ENCODE measurements at regions of chr7 and their contacts with region 1.

Region 1: GRCh38 chr7:82481499-82482097 is 38.0 kb upstream of the CACNA2D1 start:
- DNase-seq: no peak
- H3K4me3 ChIP-seq: no peak overlapping the region
- H3K27ac ChIP-seq: no peak overlapping the region
- H3K4me1 ChIP-seq: no peaks in the 10 kb centered on the region
- H3K27me3 ChIP-seq: no peaks in the 10 kb centered on the region
- CTCF ChIP-seq: peak in 2 of 3 experiments; percentile 69 to 83

Region 2: DNA sequence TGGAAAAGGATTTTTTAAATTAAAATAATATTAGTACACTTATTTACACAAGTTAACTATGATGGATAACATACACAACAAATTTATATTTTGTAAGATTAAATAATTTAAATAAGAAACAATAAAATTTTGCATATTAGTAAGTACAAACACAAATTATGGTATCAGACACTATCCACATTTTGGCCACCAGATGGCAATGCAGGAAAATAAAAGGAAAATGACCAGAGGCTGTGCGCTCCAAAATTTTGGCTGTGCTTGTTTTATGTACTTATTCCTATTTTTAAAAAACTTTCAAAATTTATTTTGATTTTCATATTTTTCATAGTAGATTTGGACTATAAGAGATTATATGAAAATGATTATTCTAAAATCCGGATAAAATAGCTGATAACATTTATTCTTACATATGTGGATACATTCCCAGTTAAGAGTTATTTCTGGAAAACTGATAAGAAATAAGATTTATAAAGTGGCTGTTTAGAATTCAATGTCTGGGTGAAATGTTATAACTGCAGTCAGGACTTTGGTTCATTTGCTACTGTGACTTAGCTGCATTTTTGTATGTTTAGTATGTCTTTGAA is 437.0 kb before region 1 on chr7:
- intact Hi-C with region 1: loop called (anchors 2 kb)
- DNase-seq: no peak
- H3K4me3 ChIP-seq: no peak overlapping the region
- H3K27ac ChIP-seq: no peak overlapping the region
- H3K4me1 ChIP-seq: peaks cover 0 to 3% of the 10 kb centered on the region in 2 donors
- H3K27me3 ChIP-seq: no peaks in the 10 kb centered on the region
- CTCF ChIP-seq: peak; percentile 30 to 73 (median 61)

Region 3: DNA sequence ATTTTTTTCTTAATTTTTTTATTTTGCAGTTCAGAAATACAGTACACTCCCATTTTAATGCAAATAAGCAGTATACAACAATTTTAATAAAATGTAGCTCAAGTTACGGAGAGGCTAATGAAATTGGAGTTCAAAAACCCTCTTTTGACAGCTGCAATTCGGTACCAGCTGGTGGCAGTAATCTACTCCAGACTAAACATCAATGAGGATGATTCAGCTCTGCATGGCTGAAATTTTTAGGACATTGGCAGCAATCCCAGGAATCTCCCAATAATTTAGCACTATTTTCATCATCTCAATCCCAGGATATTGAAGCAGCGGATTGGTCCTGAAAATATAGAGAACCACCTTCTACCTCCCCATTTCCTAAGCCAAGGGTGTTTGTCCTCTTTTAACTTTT is 316.8 kb before region 1 on chr7:
- intact Hi-C with region 1: loop called (anchors 10 kb)
- DNase-seq: no peak
- H3K4me3 ChIP-seq: no peak overlapping the region
- H3K27ac ChIP-seq: no peak overlapping the region
- H3K4me1 ChIP-seq: peaks cover 0 to 4% of the 10 kb centered on the region in 2 donors
- H3K27me3 ChIP-seq: no peaks in the 10 kb centered on the region
- CTCF ChIP-seq: peak in 2 of 3 experiments; percentile 23 to 34

Region 4: DNA sequence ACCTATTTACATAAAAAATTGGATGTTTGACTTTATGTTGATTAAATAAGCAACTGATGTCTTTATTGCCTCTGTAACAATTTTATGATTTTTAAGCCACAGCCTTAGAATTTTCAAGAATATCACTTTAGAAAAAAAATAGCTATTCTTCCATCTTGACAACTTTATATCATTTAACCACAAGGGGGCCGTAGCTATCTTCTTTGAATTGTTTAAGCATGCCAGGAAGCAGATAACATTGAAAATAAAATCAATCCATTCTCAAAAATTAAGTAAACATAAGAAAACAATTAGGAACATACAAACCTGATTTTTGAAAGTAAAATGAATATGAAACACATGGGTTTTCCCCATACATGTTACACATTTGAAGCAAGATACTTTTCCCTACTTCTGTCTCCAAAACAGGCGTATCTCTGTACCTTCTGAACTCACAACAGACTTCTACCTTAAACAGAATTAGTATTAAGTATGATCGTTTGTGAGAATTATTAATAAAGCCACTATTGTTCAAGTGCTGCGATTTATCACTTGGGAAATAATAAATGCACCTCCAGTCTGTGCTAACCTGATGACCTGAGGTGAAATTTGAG is 247.0 kb before region 1 on chr7:
- intact Hi-C with region 1: loop called (anchors 10 kb)
- DNase-seq: no peak
- H3K4me3 ChIP-seq: no peak overlapping the region
- H3K27ac ChIP-seq: no peak overlapping the region
- H3K4me1 ChIP-seq: no peaks in the 10 kb centered on the region
- H3K27me3 ChIP-seq: no peaks in the 10 kb centered on the region
- CTCF ChIP-seq: peak; percentile 17 to 59 (median 22)

Region 5: DNA sequence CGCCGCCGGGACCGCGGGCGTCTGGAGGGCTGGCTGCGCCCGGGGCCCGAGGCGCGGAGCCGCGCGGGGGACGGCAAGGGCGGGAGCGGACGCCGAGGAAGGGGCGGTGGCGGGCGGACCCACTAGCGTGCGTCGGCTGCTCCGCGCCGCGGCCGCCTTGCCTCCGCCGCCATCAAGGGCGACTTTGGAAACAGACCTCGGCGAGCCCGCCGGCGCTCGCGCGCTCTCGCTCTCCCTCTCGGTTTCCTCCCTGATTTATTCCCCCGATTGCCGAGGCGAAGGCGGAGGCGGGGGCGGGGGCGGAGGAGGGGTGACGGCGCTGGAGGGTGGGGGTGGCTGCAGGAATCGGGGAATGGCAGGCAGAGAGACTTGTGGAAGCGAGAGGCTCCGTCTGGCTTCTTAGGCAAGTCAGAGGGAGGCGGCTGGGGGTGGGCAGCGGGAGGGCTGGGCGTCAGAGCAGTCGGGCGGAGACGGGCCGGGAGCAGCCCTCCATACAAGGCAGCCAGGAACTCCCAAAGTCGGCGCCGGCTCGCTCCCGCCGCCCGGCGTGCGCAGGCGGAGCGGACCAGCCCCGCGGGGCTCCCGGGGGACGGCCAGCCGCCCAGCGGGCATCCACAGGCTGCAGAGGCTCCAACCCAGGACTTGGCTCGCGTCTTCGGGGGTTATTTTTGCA is 37.9 kb before region 1 on chr7 and contains the start of gene CACNA2D1:
- intact Hi-C with region 1: loop called (anchors 5 kb)
- DNase-seq: peak; percentile 38 to 90
- H3K4me3 ChIP-seq: peak within 1 kb of the TSS; percentile 81 to 96
- H3K27ac ChIP-seq: peak within 1 kb of the TSS; percentile 87 to 94
- H3K4me1 ChIP-seq: no peaks in the 10 kb centered on the region
- H3K27me3 ChIP-seq: no peaks in the 10 kb centered on the region
- CTCF ChIP-seq: peak in 1 of 3 experiments; percentile 29
- total RNA-seq, gene CACNA2D1: 17.3 TPM

Region 6: DNA sequence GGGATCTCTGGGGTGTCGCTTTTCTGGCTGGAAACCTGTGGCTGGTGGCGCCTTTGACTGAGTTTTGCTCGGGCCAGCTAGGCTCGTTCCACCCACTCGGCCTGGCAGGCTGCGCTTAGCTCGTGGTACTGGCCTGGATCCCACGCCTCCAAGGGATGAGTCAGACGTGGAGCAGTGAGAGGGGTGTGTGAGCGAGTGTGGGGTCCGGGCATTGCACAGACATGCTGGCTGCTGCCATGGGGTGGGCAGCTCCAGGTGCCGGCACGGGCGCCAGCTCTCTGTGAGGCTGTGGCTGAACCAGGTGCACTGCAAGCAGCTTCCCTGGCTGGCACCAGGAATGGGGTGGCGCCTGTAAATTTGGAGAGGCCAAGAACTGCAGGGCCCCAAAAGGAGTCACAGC is 25.1 kb after region 1 on chr7:
- intact Hi-C with region 1: no loop called
- DNase-seq: peak in 1 of 2 donors; percentile 70
- H3K4me3 ChIP-seq: no peak overlapping the region
- H3K27ac ChIP-seq: no peak overlapping the region
- H3K4me1 ChIP-seq: no peaks in the 10 kb centered on the region
- H3K27me3 ChIP-seq: no peaks in the 10 kb centered on the region
- CTCF ChIP-seq: no peak

Measured in ascending aorta (tissue), 2 donors.